ENCODE measurements at regions of chr3 and their contacts with region 1.

Region 1: DNA sequence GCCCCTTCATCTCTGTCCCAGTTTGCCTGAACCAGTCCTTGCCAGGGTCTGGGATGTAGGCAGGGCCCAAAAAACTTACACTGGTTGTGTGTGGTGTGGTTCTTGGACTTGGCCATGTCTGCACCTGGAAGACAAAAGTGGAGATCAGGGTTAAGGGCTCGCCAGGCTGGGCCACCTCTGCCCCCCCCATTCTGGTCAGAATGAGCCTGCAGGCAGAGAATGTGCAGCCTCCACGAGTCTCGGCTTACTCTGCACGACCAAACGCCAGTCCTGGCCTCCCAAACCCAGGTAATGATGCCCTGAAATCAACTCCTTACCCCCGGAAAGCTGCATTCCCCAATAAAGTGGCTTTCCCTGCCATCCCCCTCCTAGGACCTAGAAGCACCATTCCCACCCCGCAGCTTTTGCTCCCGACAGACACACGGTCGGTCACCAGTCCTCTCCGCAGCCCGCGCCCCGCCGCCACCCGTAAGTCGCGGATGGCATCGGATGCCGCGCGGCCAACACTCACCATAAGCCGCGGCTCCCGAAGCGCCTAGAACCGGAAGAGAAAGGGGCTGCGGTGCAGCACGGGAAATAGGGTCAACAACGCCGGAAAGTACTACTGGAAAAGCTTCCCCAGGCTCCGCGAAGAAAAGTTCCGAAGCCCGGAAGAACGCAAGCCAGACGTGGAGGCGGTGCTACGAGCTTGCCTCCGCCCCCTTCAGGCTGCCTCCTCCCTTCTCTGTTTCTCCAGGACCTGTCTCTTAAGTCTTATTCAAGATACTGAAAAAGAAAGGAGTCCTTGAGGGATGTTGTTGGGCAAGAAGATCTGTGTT is at the start of gene RPL29:
- DNase-seq: peak; percentile 90 to 93 (median 92)
- ATAC-seq: peak; percentile 91 to 96 (median 94)
- H3K4me3 ChIP-seq: peak within 1 kb of the TSS; percentile 67 to 94 (median 76)
- H3K27ac ChIP-seq: peak within 1 kb of the TSS; percentile 63 to 95 (median 85)
- H3K4me1 ChIP-seq: peaks cover 0 to 25% (median 12%) of the 10 kb centered on the region in 12 donors
- H3K27me3 ChIP-seq: no peaks in the 10 kb centered on the region
- CTCF ChIP-seq: peak in 8 of 12 donors; percentile 22 to 67 (median 30)
- POLR2A ChIP-seq: peak in 1 of 2 donors; percentile 56
- total RNA-seq, gene RPL29: 515 to 986 (median 681) TPM

Region 2: DNA sequence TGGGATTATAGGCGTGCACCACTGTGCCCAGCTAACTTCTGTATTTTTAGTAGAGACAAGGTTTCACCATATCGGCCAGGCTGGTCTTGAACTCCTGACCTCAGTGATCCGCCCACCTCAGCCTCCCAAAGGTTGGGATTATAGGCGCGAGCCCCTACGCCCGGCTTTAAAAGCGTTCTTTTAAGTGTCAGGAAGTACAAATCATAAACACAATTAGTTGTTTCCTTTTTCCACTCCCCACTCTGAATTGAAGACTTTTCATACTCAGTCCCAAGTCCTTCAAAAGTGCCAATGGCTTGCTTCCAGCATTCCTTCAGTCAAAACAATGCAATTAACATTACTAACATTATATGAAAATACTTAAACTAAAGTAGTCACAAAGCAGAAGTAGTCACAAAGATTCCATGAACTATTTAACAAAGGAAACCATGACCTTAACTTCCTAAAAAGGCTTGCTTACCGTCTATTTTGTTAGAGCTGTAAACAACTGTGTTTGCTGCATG is 274.7 kb after region 1 on chr3:
- intact Hi-C with region 1: loop called in 1 of 10 experiments (anchors 5 kb)
- DNase-seq: no peak
- ATAC-seq: peak in 3 of 4 donors; percentile 11 to 40 (median 40)
- H3K4me3 ChIP-seq: peak overlapping the region in 1 of 12 donors; percentile 35
- H3K27ac ChIP-seq: peak overlapping the region; percentile 1 to 94 (median 40)
- H3K4me1 ChIP-seq: peaks cover 3 to 79% (median 64%) of the 10 kb centered on the region in 12 donors
- H3K27me3 ChIP-seq: no peaks in the 10 kb centered on the region
- CTCF ChIP-seq: no peak
- POLR2A ChIP-seq: no peak

Region 3: DNA sequence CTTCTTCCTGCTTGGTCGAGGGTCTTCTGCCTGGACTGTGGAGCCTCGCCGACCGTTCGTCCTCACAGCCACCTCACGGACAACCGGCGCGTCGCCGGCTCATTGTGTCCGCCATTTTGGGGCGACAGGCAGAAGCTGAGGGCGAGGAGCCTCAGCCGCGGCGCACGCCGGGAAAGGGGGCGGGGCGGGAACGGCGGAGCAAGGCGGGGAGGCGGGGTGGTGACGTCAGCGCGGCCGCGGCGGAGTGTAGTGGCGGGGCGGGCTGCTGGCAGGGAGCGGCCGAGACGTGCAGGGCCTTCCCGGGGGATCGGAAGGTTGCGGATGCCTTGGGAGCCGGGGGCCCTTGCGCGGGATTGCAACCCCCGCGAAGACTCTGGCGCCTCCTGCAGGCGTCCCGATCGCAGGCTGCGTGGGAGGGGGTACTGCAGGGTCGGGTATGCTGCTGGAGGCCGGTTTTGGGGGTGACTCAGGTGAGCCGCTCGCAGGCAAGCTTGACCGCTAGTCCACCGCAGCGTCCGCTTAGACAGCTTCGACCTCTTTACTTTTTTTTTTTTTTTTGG is 283.0 kb after region 1 on chr3 and contains the start of gene WDR82:
- intact Hi-C with region 1: loop called in 2 of 10 experiments (anchors 5 to 10 kb)
- DNase-seq: peak; percentile 98 to 99 (median 99)
- ATAC-seq: peak; percentile 89 to 97 (median 96)
- H3K4me3 ChIP-seq: peak within 1 kb of the TSS; percentile 73 to 99 (median 82)
- H3K27ac ChIP-seq: peak within 1 kb of the TSS; percentile 94 to 99 (median 98)
- H3K4me1 ChIP-seq: peaks cover 0 to 80% (median 54%) of the 10 kb centered on the region in 12 donors
- H3K27me3 ChIP-seq: no peaks in the 10 kb centered on the region
- CTCF ChIP-seq: peak; percentile 39 to 69 (median 56)
- POLR2A ChIP-seq: peak in 1 of 2 donors; percentile 68
- total RNA-seq, gene WDR82: 44.9 to 73.6 (median 61.2) TPM